GM13977 (cell line): ENCODE measurements at regions of chr1 and their contacts with region 1.

Region 1: GRCh38 chr1:87084244-87084836 is 169.9 kb downstream of the HS2ST1 start:
- DNase-seq: no peak
- CTCF ChIP-seq: peak; percentile 31

Region 2: GRCh38 chr1:86833461-86834215 is 250.7 kb before region 1 on chr1:
- in situ Hi-C with region 1: loop called (anchors 10 kb)
- DNase-seq: peak; percentile 73
- CTCF ChIP-seq: peak; percentile 64